K562 (cell line): ENCODE measurements at regions of chr12 and their contacts with region 1.

Region 1: GRCh38 chr12:124651516-124652273 is 84.3 kb upstream of the NCOR2 start:
- DNase-seq: peak in 2 of 4 experiments; percentile 25 to 35
- ATAC-seq: no peak
- H3K4me3 ChIP-seq: no peak overlapping the region
- H3K27ac ChIP-seq: no peak overlapping the region
- H3K4me1 ChIP-seq: peaks cover 8 to 27% of the 10 kb centered on the region in 2 experiments; a peak in 4 of 5 replicates
- H3K27me3 ChIP-seq: no peaks in the 10 kb centered on the region
- CTCF ChIP-seq: no peak
- EP300 ChIP-seq: no peak
- POLR2A ChIP-seq: no peak
- RAD21 ChIP-seq: no peak

Region 2: DNA sequence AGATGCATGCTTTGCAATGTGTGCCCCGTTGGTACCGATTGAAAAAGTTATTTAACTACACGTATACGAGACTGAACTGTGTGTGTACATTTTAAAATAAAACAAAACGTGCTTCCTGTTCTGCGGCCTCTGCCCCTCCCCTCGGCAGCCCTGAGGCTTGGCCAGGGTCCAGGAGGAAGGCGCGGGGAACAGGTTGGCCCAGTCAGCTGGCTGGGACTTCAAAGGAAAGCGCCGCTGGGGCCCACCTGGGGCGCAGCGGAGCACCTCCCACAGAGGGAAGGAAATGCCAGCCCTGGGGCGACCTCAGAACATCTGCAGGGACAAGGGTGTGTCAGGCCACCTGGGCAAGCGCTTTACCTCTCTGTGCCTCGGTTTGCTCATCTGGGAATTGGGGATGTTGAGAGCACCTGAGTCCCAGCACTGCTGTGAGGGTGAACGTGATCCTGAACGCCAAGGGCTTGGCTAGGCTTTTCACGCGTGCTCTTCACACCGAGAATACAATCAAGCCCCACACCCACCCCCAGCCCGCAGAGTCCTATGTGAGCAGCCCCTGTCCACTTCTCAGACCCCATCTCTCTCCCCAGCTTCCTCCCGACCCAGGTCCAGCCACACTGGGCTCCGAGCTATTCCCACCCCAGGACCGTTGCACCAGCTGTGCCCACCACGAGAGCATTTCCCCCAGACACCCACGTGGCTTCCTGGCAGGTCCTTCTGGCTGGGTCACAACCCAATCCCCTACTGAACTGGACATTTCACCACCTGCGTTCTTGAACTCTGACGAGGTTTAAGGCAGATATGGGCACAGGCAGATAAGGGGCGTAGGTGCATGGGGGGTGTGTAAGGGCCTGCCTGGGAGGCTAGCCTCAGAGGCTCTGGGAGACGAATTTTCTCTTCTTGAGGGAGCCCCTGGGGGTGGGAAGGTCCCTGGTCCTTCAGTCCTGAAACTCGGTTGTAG is 42.4 kb before region 1 on chr12:
- CTCF ChIA-PET with region 1: no interaction called
- POLR2A ChIA-PET with region 1: no interaction called
- in situ Hi-C with region 1: no loop called
- intact Hi-C with region 1: no loop called
- DNase-seq: peak; percentile 72 to 91 (median 83)
- ATAC-seq: peak; percentile 72
- H3K4me3 ChIP-seq: no peak overlapping the region
- H3K27ac ChIP-seq: peak overlapping the region; percentile 21; the same call in 1 of the 3 replicates
- H3K4me1 ChIP-seq: peaks cover 37 to 53% of the 10 kb centered on the region in 2 experiments
- H3K27me3 ChIP-seq: 0 out of 5 replicates have a peak, but pooled peaks cover 0 to 6% of the 10 kb centered on the region in 2 experiments
- CTCF ChIP-seq: no peak; a peak in 1 of 6 replicates
- EP300 ChIP-seq: no peak
- POLR2A ChIP-seq: no peak
- RAD21 ChIP-seq: no peak

Region 3: GRCh38 chr12:124625867-124626675 is 25.6 kb before region 1 on chr12:
- CTCF ChIA-PET with region 1: no interaction called
- POLR2A ChIA-PET with region 1: no interaction called
- in situ Hi-C with region 1: no loop called
- intact Hi-C with region 1: no loop called
- DNase-seq: peak; percentile 58 to 71 (median 68)
- ATAC-seq: peak; percentile 80
- H3K4me3 ChIP-seq: no peak overlapping the region
- H3K27ac ChIP-seq: no peak overlapping the region
- H3K4me1 ChIP-seq: peaks cover 10 to 19% of the 10 kb centered on the region in 2 experiments; a peak in 4 of 5 replicates
- H3K27me3 ChIP-seq: peaks cover 0 to 14% of the 10 kb centered on the region in 2 experiments; a peak in 1 of 5 replicates
- CTCF ChIP-seq: no peak
- EP300 ChIP-seq: no peak
- POLR2A ChIP-seq: no peak
- RAD21 ChIP-seq: no peak

Region 4: DNA sequence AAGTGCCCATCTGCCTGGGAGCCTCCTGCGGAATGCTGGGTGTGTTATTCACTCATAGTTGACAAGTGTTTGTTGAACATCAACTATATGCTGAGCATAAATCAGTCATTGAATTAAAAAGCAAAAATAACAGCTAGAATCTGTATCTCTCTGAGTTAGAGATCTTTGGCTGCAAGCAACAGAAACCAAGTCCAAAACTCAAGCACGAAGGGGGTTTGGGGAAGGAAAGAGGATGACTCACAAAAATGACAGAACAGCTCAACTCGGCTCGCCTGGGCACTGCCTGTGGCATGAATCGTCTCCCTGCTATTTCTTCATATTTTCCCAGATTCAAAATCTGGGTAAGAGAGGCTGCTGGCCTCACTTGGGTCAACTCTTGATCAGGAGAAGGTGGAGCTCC is 11.6 kb before region 1 on chr12:
- CTCF ChIA-PET with region 1: no interaction called
- POLR2A ChIA-PET with region 1: interaction called, 13 read pairs
- in situ Hi-C with region 1: no loop called
- intact Hi-C with region 1: no loop called
- DNase-seq: no peak
- ATAC-seq: no peak
- H3K4me3 ChIP-seq: no peak overlapping the region
- H3K27ac ChIP-seq: no peak overlapping the region
- H3K4me1 ChIP-seq: peaks cover 9 to 14% of the 10 kb centered on the region in 2 experiments; a peak in 4 of 5 replicates
- H3K27me3 ChIP-seq: peaks cover 0 to 4% of the 10 kb centered on the region in 2 experiments; a peak in 2 of 5 replicates
- CTCF ChIP-seq: no peak
- EP300 ChIP-seq: no peak
- POLR2A ChIP-seq: no peak
- RAD21 ChIP-seq: no peak